ENCODE measurements at regions of chr12 and their contacts with region 1.

Region 1: DNA sequence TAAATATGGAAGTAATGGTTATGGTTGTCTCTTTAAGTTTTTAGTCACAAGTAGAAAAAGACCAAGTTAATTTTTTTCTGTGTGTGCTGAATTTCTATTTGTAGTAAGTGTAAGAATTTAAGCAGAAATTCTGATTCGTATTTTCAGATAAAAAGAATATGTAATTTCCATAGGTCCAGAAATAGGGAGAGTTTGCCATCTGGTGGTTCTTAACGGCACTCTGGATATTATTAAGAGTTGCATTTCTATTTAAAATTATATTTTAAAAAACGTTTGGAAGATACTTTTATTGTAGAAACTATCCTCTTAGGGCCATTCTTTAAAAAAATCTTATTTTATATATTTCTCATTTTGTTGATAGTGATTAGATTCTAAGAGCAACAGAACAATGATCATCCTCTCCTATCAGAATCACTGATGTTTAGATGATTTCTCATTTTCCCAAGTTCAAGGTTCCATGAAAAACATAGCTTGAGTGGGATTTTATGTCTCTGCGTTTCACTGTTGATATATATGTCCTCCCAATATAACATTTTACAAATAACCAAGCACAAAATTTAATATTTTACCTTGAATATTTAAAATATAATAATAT is 88.3 kb downstream of the LRRK2 start:
- DNase-seq: no peak
- H3K4me3 ChIP-seq: no peak overlapping the region
- H3K27ac ChIP-seq: no peak overlapping the region
- H3K4me1 ChIP-seq: peaks cover 0 to 16% (median 6%) of the 10 kb centered on the region in 3 donors
- H3K27me3 ChIP-seq: no peaks in the 10 kb centered on the region
- CTCF ChIP-seq: peak; percentile 12 to 70 (median 53)
- POLR2A ChIP-seq: no peak

Region 2: DNA sequence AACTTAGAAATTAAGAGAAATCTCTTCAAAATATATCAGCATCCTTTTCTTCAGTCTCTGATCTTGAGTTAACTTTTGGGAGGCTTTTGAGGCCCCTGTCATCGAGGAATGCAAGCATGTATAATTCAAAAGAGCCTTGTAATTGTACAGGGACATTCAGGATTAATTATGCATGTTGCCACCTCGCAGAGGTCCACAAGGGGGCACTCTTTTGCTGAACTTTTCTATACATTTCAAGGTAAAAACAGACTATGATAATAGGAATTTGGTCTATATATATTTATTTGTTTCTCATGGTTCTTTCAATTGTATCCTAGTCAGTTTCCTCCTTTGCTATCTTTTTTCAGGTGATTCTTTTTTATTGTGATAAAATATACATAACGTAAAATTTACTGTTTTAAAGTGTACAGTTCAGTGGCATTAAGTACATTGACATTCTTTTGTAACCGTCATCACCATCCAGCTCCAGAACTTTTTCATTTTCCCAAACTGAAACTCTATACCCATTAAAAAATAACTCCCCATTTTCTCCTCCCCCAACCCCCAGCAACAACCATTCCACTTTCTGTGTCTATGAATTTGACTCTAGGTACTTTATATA is 160.2 kb before region 1 on chr12:
- intact Hi-C with region 1: loop called (anchors 5 kb)
- DNase-seq: no peak
- H3K4me3 ChIP-seq: no peak overlapping the region
- H3K27ac ChIP-seq: no peak overlapping the region
- H3K4me1 ChIP-seq: peaks cover 0 to 34% (median 0%) of the 10 kb centered on the region in 3 donors
- H3K27me3 ChIP-seq: no peaks in the 10 kb centered on the region
- CTCF ChIP-seq: peak; percentile 56 to 86 (median 84)
- POLR2A ChIP-seq: no peak

Region 3: GRCh38 chr12:40224439-40225291 is 88.4 kb before region 1 on chr12 and contains the start of gene LRRK2:
- intact Hi-C with region 1: no loop called
- DNase-seq: peak; percentile 25
- H3K4me3 ChIP-seq: peak within 1 kb of the TSS; percentile 64 to 81 (median 72)
- H3K27ac ChIP-seq: peak within 1 kb of the TSS; percentile 94 to 96 (median 94)
- H3K4me1 ChIP-seq: peaks cover 0 to 56% (median 4%) of the 10 kb centered on the region in 3 donors
- H3K27me3 ChIP-seq: no peaks in the 10 kb centered on the region
- CTCF ChIP-seq: peak in 2 of 6 experiments; percentile 2 to 6
- POLR2A ChIP-seq: peak in 2 of 4 donors; percentile 79 to 84
- total RNA-seq, gene LRRK2: 10.9 to 21.4 (median 13.4) TPM